Dendritic cell treated with granulocyte-macrophage colony-stimulating factor and Interleukin-4, amounts not matched to agents 40 ng/mL and 50 ng/mL, for 4 days (primary cell): ENCODE measurements at regions of chr6 and their contacts with region 1.

Region 1: GRCh38 chr6:149746147-149746946 is at the start of gene NUP43:
- H3K4me3 Mint-ChIP-seq: peak within 1 kb of the TSS; percentile 99
- H3K27ac Mint-ChIP-seq: peak within 1 kb of the TSS; percentile 95
- H3K4me1 Mint-ChIP-seq: peaks cover 28% of the 10 kb centered on the region
- H3K27me3 Mint-ChIP-seq: no peaks in the 10 kb centered on the region

Region 2: GRCh38 chr6:149717588-149718458 is 28.5 kb before region 1 on chr6 and contains the start of gene LATS1:
- intact Hi-C with region 1: loop called (anchors 5 kb)
- H3K4me3 Mint-ChIP-seq: peak within 1 kb of the TSS; percentile 99
- H3K27ac Mint-ChIP-seq: peak within 1 kb of the TSS; percentile 97
- H3K4me1 Mint-ChIP-seq: peaks cover 13% of the 10 kb centered on the region
- H3K27me3 Mint-ChIP-seq: no peaks in the 10 kb centered on the region

Region 3: GRCh38 chr6:149723771-149724417 is 22.5 kb before region 1 on chr6:
- intact Hi-C with region 1: loop called (anchors 2 kb)
- H3K4me3 Mint-ChIP-seq: no peak overlapping the region
- H3K27ac Mint-ChIP-seq: peak overlapping the region; percentile 38
- H3K4me1 Mint-ChIP-seq: peaks cover 23% of the 10 kb centered on the region
- H3K27me3 Mint-ChIP-seq: no peaks in the 10 kb centered on the region

Region 4: DNA sequence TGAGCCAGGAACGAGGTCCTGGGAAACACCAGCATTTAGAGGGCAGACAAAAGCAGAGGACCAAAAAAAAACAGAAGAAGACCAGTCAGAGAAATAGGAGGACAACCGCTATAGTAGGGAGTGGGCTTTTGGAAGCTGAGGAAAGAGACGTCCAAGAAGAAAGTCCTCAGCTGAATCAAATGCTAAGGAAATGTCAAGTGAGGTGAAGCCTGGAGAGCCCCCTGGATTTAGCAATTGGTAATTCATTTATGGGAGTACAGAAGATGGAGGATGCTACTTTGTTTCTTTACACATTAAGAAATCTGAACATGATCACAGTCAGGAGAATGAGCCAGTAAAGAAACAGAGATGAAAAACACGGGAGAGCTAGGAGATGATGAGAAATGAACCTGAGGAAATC is 76.7 kb after region 1 on chr6:
- intact Hi-C with region 1: no loop called
- H3K4me3 Mint-ChIP-seq: no peak overlapping the region
- H3K27ac Mint-ChIP-seq: no peak overlapping the region
- H3K4me1 Mint-ChIP-seq: no peaks in the 10 kb centered on the region
- H3K27me3 Mint-ChIP-seq: no peaks in the 10 kb centered on the region

Region 5: DNA sequence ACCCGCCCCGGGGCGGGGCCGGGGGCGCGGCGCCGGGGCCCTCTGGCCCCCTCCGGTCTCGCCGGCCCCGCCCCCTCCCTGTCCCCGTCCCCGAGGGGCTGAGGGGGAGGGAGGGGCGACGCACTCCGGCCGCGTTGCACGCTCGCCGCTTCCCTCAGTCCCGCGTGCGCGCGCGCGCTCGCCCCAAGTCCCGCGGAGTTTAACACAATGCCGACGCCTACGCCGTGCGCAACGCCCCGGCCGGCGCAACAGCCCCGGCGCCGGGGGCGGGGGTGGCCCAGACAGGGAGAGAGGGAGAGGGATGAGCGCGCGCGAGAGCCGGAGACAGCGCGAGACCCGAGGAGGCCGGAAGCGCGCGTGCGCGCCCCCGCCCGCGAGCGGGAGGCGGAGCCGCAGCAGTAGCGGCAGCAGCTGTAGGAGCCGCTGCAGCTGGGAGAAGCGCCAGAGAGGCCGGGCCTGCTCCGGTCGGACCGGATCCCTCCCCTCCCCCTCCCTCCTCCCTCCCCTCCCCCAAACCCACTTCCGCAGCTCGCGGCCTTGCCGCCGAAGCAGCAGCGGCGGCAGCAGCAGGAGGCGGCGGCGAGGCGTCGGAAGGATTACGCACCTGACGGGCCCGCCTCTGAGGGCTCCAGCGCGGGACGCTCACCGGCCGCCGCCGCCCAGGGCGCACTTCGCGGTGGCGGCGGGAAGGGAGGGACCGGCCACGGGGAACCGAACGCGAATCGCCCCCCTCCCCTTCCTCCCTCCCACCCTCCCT is 1644.1 kb after region 1 on chr6:
- intact Hi-C with region 1: loop called (anchors 5 kb)
- H3K4me3 Mint-ChIP-seq: peak overlapping the region; percentile 90
- H3K27ac Mint-ChIP-seq: peak overlapping the region; percentile 97
- H3K4me1 Mint-ChIP-seq: peaks cover 38% of the 10 kb centered on the region
- H3K27me3 Mint-ChIP-seq: no peaks in the 10 kb centered on the region